ENCODE measurements at regions of chr9 and their contacts with region 1.

Region 1: GRCh38 chr9:133509179-133510079 is 15.3 kb downstream of the MYMK start:
- DNase-seq: peak in 6 of 9 donors; percentile 42 to 61 (median 55)
- ATAC-seq: peak; percentile 60
- H3K4me3 ChIP-seq: peak overlapping the region; percentile 34
- H3K4me3 Mint-ChIP-seq: peak overlapping the region; percentile 51 to 91 (median 84)
- H3K27ac ChIP-seq: peak overlapping the region; percentile 69
- H3K27ac Mint-ChIP-seq: peak overlapping the region; percentile 18 to 99 (median 94)
- H3K4me1 ChIP-seq: peaks cover 4 to 31% of the 10 kb centered on the region in 2 donors
- H3K4me1 Mint-ChIP-seq: peaks cover 7 to 37% (median 27%) of the 10 kb centered on the region in 7 donors
- H3K27me3 ChIP-seq: no peaks in the 10 kb centered on the region
- H3K27me3 Mint-ChIP-seq: peaks cover 0 to 7% (median 0%) of the 10 kb centered on the region in 5 donors

Region 2: DNA sequence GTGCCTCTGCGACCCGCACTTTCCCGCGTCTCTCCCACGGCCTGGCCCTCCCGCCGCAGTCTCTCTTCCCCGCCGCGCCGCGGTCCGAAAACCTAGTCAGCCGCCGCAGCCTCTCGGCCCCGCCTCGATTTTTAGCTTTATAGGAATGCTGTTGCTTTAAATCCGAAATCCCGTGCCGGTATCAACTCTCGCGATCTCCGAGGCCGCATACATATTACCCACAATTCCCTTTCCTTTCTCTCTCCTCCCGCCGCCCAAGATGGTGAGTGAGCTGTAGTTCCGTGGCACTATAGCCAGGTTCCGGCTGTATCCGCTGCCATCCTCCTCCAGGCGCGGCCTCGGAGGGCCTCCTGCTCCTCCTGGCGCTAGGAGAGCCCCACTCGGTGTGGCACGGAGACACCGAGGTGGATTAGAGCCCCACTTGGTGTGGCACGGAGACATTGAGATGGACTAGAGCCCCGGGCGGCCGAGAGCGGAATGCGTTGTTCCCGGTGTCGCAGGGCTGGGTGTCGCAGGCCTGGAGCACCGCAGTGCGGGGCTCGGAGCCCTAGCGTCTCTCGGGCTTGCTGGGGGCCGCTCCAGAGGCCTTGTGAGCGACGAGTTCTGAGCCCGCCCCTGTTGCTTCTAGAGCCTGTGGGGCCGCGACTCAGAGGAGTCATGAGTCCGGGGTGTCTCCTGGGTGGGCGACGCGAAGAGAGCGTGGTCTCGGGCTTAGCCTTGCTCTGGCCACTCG is 161.3 kb before region 1 on chr9 and contains the starts of genes MED22 and RPL7A:
- CTCF ChIA-PET with region 1: no interaction called
- POLR2A ChIA-PET with region 1: no interaction called
- intact Hi-C with region 1: no loop called
- DNase-seq: peak; percentile 72 to 95 (median 92)
- ATAC-seq: peak; percentile 95
- H3K4me3 ChIP-seq: peak within 1 kb of the TSS; percentile 93
- H3K4me3 Mint-ChIP-seq: peak within 1 kb of the TSS; percentile 94 to 100 (median 98)
- H3K27ac ChIP-seq: peak within 1 kb of the TSS; percentile 98
- H3K27ac Mint-ChIP-seq: peak within 1 kb of the TSS; percentile 87 to 99 (median 97)
- H3K4me1 ChIP-seq: peaks cover 19 to 20% of the 10 kb centered on the region in 2 donors
- H3K4me1 Mint-ChIP-seq: peaks cover 23 to 46% (median 39%) of the 10 kb centered on the region in 7 donors
- H3K27me3 ChIP-seq: no peaks in the 10 kb centered on the region
- H3K27me3 Mint-ChIP-seq: peaks cover 0 to 2% (median 0%) of the 10 kb centered on the region in 5 donors
- total RNA-seq, gene MED22: 26.5 to 44.6 (median 32.8) TPM
- total RNA-seq, gene RPL7A: 2,002 to 2,815 (median 2,428) TPM

Region 3: GRCh38 chr9:133485361-133486260 is 23.8 kb before region 1 on chr9:
- CTCF ChIA-PET with region 1: interaction called, 10 read pairs
- POLR2A ChIA-PET with region 1: interaction called, 3 read pairs
- intact Hi-C with region 1: no loop called
- DNase-seq: no peak
- ATAC-seq: no peak
- H3K4me3 ChIP-seq: no peak overlapping the region
- H3K4me3 Mint-ChIP-seq: peak overlapping the region in 3 of 10 donors; percentile 14 to 49 (median 35)
- H3K27ac ChIP-seq: no peak overlapping the region
- H3K27ac Mint-ChIP-seq: peak overlapping the region in 1 of 9 donors; percentile 50
- H3K4me1 ChIP-seq: peaks cover 3 to 5% of the 10 kb centered on the region in 2 donors
- H3K4me1 Mint-ChIP-seq: peaks cover 0 to 7% (median 6%) of the 10 kb centered on the region in 7 donors
- H3K27me3 ChIP-seq: no peaks in the 10 kb centered on the region
- H3K27me3 Mint-ChIP-seq: peaks cover 0 to 6% (median 0%) of the 10 kb centered on the region in 5 donors

Region 4: DNA sequence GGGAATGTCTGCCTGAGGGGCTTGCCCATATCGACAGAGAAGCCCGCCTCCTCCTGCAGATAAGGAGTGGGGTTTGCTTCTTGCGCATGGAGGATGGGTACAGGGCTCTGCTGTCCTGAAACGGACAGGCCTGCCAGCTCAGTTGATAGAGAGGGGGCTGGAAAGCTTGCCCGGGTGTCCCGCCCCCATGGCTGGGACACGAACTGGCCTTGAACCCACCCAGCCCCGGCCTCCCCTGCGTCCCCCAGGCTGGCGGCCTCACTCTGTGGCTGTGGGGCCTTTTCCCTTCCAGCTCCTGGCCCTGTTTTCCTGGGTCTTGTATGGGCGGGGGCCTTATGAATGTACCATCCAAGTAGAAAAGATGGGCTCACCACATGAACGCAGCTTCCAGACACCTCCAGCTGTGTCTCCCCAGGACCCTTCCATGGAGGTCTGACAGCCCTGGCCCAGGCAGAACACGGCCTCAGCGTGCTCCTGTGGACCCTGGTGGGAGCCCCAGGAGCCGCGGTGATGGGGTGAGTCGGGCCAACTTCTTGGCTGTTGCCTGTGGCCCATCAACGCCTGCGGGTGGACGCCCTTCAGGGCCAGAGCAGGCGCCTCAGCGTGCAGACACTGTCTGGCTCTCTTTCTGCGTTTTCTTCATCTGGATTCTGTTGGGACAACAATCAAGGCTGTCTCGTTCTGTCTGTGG is 14.6 kb before region 1 on chr9:
- CTCF ChIA-PET with region 1: interaction called, 3 read pairs
- POLR2A ChIA-PET with region 1: interaction called, 13 read pairs
- intact Hi-C with region 1: no loop called
- DNase-seq: no peak
- ATAC-seq: no peak
- H3K4me3 ChIP-seq: no peak overlapping the region
- H3K4me3 Mint-ChIP-seq: no peak overlapping the region
- H3K27ac ChIP-seq: no peak overlapping the region
- H3K27ac Mint-ChIP-seq: no peak overlapping the region
- H3K4me1 ChIP-seq: no peaks in the 10 kb centered on the region
- H3K4me1 Mint-ChIP-seq: no peaks in the 10 kb centered on the region
- H3K27me3 ChIP-seq: no peaks in the 10 kb centered on the region
- H3K27me3 Mint-ChIP-seq: peaks cover 0 to 6% (median 0%) of the 10 kb centered on the region in 5 donors

Region 5: DNA sequence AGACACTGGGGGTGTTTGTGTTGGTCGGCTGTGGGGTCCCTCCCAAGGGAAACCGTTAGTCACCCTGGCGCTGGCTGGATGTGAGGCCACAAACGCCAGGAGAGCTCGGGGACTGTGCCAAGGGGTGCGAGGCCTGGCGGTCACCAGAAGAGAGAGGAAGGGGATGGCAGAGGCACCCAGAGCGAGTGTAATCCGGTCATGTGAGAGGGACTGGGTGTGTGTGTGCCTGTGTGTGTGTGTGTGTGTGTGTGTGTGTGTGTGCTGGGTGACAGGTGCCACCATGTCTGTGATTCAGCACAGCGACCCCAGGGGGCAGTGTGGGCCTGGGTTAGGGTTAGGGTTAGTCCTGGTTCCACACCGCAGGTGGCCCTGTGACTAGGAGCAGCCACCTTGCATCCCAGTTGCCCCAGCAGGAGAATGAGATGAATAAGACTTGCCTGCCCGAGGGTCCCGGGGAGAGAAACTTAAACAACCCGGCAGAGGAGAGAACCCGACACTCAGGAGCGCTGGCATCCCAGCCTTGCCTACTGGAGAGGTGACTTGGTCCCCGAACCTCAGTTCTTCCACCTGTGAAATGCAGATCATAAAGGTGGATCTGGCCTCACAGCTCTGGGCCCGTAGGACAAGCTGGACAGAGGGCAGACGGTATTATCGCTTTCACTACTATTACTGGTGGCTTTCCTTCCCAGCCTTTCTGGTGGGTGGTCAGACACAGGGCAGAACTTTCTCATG is 23.7 kb after region 1 on chr9:
- CTCF ChIA-PET with region 1: no interaction called
- POLR2A ChIA-PET with region 1: interaction called, 11 read pairs
- intact Hi-C with region 1: loop called in 1 of 2 experiments (anchors 1 kb)
- DNase-seq: peak; percentile 47 to 84 (median 77)
- ATAC-seq: peak; percentile 86
- H3K4me3 ChIP-seq: no peak overlapping the region
- H3K4me3 Mint-ChIP-seq: peak overlapping the region in 9 of 10 donors; percentile 57 to 82 (median 72)
- H3K27ac ChIP-seq: no peak overlapping the region
- H3K27ac Mint-ChIP-seq: peak overlapping the region in 8 of 9 donors; percentile 58 to 91 (median 80)
- H3K4me1 ChIP-seq: peaks cover 0 to 21% of the 10 kb centered on the region in 2 donors
- H3K4me1 Mint-ChIP-seq: peaks cover 6 to 24% (median 13%) of the 10 kb centered on the region in 7 donors
- H3K27me3 ChIP-seq: no peaks in the 10 kb centered on the region
- H3K27me3 Mint-ChIP-seq: peaks cover 0 to 18% (median 7%) of the 10 kb centered on the region in 5 donors

Region 6: GRCh38 chr9:134111064-134111463 is 601.6 kb after region 1 on chr9:
- CTCF ChIA-PET with region 1: no interaction called
- POLR2A ChIA-PET with region 1: no interaction called
- intact Hi-C with region 1: no loop called
- DNase-seq: no peak
- ATAC-seq: no peak
- H3K4me3 ChIP-seq: no peak overlapping the region
- H3K4me3 Mint-ChIP-seq: no peak overlapping the region
- H3K27ac ChIP-seq: no peak overlapping the region
- H3K27ac Mint-ChIP-seq: no peak overlapping the region
- H3K4me1 ChIP-seq: no peaks in the 10 kb centered on the region
- H3K4me1 Mint-ChIP-seq: no peaks in the 10 kb centered on the region
- H3K27me3 ChIP-seq: no peaks in the 10 kb centered on the region
- H3K27me3 Mint-ChIP-seq: peaks cover 0 to 4% (median 0%) of the 10 kb centered on the region in 5 donors